A549 (cell line): ENCODE measurements at regions of chr22 and their contacts with region 1.

Region 1: DNA sequence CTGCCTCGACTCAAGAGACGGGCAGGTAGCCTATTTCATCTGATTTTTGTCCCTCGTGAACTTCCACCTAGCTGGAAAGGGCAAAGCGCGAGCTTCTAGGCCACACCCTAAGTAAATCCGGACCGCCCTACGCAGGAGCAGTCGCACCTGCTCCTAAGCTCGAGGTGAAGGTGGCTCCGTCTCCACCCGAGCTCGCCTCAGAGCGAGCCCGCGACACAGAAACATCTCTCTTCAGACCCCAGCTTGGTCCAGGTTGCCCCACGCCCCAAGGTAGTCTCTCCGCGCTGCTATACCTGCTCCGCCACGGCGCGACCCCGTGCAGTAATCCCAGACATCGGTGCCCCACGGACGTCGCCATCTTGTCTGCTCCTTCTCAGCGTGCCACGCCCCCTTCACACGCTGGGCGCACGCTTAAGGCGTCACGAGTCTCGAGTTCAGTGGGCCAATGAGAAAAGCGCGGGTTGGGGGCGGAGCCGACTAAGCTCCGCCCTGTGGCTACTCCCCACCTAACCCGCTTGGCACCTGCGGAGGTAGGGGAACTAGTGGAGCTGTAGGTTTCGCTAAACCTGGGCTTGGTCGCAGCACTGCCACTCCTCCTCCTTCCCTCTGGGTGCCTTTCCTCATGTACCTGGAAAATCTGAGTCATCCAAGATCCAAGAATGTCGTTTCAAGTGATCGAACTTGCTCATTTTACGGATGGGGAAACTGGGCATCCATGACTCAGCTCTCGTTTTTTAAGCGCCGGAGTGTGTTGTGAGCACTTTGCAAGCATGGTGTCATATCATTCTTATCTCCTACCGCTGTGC is at the start of gene PISD:
- DNase-seq: peak; percentile 88 to 94
- ATAC-seq: peak; percentile 92
- H3K4me3 ChIP-seq: peak within 1 kb of the TSS; percentile 72
- H3K27ac ChIP-seq: peak within 1 kb of the TSS; percentile 80 to 90
- H3K4me1 ChIP-seq: 0 out of 3 replicates have a peak, but pooled peaks cover 3% of the 10 kb centered on the region
- CTCF ChIP-seq: no peak
- EP300 ChIP-seq: no peak
- POLR2A ChIP-seq: peak; percentile 78
- RAD21 ChIP-seq: no peak
- polyA plus RNA-seq, gene PISD: 11.0 and 13.1 TPM in 2 replicates

Region 2: DNA sequence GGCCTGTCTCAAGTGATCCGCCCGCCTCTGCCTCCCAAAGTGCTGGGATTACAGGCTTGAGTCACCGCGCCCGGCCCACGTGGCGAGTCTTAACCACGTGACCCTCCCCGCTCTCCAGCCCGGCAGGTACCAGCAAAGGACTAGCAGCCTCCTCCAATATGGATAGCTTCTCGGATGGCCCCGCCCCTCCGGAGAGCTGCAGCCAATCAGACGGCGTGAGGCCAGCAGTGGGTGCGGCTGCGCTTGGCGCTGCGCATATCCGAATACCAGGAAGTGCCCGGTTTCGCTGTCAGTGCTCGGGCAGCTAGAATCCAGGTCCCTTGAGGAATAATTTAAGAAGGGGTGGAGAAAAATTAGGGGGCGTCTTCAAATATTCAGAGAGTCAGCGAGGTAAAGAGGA is 14.6 kb after region 1 on chr22:
- CTCF ChIA-PET with region 1: interaction called, 11 read pairs
- POLR2A ChIA-PET with region 1: interaction called, 10 read pairs
- DNase-seq: peak; percentile 83 to 90
- ATAC-seq: peak; percentile 100
- H3K4me3 ChIP-seq: peak overlapping the region; percentile 40
- H3K27ac ChIP-seq: peak overlapping the region; percentile 60 to 79
- H3K4me1 ChIP-seq: no peaks in the 10 kb centered on the region
- CTCF ChIP-seq: no peak
- EP300 ChIP-seq: no peak
- POLR2A ChIP-seq: no peak
- RAD21 ChIP-seq: no peak